Breast epithelium (tissue), 4 donors: ENCODE measurements at regions of chr18 and their contacts with region 1.

Region 1: DNA sequence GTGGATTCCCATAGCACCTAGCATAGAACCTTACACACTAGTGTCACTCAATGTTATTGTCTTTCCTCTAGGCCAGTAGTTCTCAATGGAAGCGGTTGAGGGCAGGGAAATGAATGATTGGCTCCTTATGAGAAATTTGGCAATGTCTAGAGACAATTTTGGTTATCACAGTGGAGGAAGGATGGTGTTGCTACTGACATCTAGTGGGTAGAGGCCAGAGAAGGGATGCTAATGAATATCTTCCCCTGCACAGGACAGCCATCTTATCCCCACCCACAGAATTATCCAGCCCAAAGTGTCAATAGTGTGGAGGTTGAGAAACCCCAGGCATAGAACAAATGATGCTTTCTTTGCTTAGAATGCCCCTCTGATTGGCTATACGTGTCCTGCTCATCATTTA is 15.8 kb downstream of the C18orf63 start:
- DNase-seq: no peak
- H3K4me3 ChIP-seq: no peak overlapping the region
- H3K27ac ChIP-seq: no peak overlapping the region
- H3K4me1 ChIP-seq: no peaks in the 10 kb centered on the region
- H3K27me3 ChIP-seq: no peaks in the 10 kb centered on the region
- CTCF ChIP-seq: peak in 1 of 3 donors; percentile 19
- POLR2A ChIP-seq: no peak

Region 2: DNA sequence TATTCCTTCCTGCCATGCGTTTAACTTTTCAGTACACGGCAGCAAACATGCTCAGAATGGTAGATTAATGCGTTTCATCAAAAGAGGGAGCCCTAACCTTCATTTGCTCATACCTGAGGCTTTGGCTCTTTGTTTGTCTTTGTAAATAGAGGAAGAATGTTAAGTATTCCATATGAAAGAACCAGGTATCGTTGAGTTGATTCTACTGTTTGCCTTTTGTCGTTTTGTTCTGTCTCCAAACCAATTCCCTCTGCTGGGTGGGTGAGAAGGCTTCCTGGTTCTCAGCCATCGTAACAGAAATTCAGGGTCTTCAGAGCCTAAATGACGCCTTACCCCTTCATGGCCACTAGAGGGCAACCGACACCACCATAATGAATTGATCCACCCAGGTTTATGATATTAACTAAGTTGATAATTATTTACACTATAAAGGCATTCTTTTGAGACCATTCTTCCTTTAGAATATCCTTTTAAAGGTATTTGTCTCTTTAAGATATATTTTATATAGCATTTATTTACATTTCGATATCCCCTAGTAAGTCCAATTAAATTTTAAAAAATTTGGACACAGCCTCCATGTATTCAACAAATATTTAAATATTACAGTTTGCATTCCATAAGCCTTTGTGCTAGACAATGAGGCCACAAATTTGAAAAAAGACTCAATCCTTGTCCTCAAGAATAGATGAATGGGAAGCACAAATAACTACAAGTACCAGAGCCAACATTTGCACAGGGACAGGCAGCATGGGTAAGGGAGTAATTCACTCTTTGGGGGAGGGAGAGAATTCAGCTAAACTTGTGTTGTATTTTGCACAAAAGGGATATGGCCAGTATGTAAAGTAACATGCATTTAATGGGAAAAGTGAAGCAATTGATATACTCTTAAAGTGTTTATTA is 134.9 kb before region 1 on chr18:
- intact Hi-C with region 1: loop called (anchors 10 kb)
- DNase-seq: peak in 1 of 2 donors; percentile 33
- H3K4me3 ChIP-seq: peak overlapping the region in 2 of 3 donors; percentile 30 to 48
- H3K27ac ChIP-seq: peak overlapping the region; percentile 29 to 39
- H3K4me1 ChIP-seq: no peaks in the 10 kb centered on the region
- H3K27me3 ChIP-seq: no peaks in the 10 kb centered on the region
- CTCF ChIP-seq: peak; percentile 88 to 97 (median 90)
- POLR2A ChIP-seq: no peak

Region 3: GRCh38 chr18:74316259-74317170 is 14.9 kb before region 1 on chr18:
- intact Hi-C with region 1: no loop called
- DNase-seq: peak in 1 of 2 donors; percentile 29
- H3K4me3 ChIP-seq: no peak overlapping the region
- H3K27ac ChIP-seq: peak overlapping the region in 1 of 2 donors; percentile 25
- H3K4me1 ChIP-seq: no peaks in the 10 kb centered on the region
- H3K27me3 ChIP-seq: no peaks in the 10 kb centered on the region
- CTCF ChIP-seq: no peak
- POLR2A ChIP-seq: no peak

Region 4: DNA sequence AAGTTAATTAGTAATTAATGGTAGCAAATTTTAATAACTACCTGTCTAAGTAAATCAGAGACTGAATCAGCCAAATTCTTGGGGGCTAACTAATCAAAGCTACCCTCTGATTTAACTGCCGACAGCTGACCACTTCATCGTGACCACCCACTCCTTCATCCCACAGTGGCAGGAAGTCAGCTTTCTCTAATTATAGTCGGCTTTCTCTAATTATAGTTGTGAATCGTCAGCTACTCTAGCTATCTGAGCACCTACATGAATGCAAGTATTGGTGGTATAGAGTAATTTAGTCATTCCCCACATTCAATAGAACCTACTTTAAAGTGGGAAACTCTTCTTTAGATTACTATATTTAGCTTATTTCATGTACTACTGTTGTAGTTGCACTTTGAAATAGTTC is 692.1 kb after region 1 on chr18:
- intact Hi-C with region 1: loop called (anchors 10 kb)
- DNase-seq: no peak
- H3K4me3 ChIP-seq: no peak overlapping the region
- H3K27ac ChIP-seq: no peak overlapping the region
- H3K4me1 ChIP-seq: no peaks in the 10 kb centered on the region
- H3K27me3 ChIP-seq: no peaks in the 10 kb centered on the region
- CTCF ChIP-seq: no peak
- POLR2A ChIP-seq: no peak